Pancreas (tissue), 10 donors: ENCODE measurements at regions of chr20 and their contacts with region 1.

Region 1: DNA sequence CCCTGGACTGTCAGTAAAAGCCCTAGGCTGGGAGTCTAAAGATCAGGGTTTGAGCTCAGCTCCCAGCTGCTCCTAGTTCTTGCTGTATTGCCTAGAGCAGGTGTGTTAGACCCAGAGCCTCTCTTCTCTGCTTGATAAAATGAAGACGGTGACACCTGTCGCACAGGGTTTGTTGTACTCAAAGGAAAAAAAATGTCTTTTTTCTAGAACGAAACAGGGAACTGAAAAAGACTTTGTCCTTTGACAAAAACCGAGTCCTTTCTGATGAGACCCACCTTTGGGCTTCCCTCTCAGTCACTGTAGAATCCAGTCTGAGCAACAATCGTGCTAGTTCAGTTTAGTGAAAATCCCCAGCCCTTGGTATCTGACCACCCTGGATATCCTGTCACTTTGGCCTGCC is 102.1 kb upstream of the LAMP5 start:
- DNase-seq: no peak
- ATAC-seq: no peak
- H3K4me3 ChIP-seq: no peak overlapping the region
- H3K27ac ChIP-seq: no peak overlapping the region
- H3K4me1 ChIP-seq: no peaks in the 10 kb centered on the region
- H3K27me3 ChIP-seq: no peaks in the 10 kb centered on the region
- CTCF ChIP-seq: no peak

Region 2: GRCh38 chr20:9609887-9610502 is 197.7 kb after region 1 on chr20:
- intact Hi-C with region 1: loop called (anchors 5 to 10 kb)
- DNase-seq: peak in 3 of 6 donors; percentile 27 to 77 (median 43)
- ATAC-seq: peak; percentile 55 to 88 (median 76)
- H3K4me3 ChIP-seq: no peak overlapping the region
- H3K27ac ChIP-seq: no peak overlapping the region
- H3K4me1 ChIP-seq: no peaks in the 10 kb centered on the region
- H3K27me3 ChIP-seq: no peaks in the 10 kb centered on the region
- CTCF ChIP-seq: peak; percentile 45 to 69 (median 62)